ENCODE measurements at regions of chr5 and their contacts with region 1.

Region 1: DNA sequence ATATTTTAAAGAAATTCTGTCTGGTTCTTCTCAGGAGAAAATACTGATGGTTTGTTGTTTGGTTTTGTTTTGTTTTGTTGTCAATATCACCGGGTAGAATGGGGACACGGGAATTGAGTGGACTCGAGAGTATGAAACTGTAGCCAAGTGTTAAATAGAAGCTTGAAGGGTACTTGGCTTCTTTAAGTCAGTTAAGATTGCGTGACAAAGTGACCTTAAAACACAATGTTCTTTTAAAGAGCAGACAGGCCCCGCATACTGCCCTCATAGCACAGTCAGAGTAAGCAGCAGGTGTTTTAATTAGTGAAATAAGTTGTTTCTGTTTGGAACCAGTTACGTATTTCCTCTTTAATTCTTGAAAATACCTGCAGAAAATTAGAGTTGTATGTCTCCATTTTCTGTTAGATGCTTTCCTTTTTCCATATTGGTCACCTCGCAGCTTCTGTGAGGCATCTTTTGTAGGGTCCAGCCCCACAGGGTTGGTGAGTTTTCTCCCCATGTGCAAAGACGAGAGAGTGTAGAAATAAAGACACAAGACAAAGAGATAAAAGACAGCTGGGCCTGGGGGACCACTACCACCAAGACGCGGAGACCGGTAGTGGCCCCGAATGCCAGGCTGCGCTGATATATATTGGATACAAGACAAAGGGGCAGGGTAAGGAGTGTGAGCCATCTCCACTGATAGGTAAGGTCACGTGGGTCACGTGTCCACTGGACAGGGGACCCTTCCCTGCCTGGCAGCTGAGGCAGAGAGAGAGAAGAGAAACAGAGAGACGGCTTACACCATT is 9.6 kb downstream of the TRIP13 start:
- DNase-seq: no peak
- H3K4me3 ChIP-seq: no peak overlapping the region
- H3K27ac ChIP-seq: peak overlapping the region in 1 of 59 donors; percentile 21
- H3K27me3 ChIP-seq: no peaks in the 10 kb centered on the region
- CTCF ChIP-seq: no peak

Region 2: DNA sequence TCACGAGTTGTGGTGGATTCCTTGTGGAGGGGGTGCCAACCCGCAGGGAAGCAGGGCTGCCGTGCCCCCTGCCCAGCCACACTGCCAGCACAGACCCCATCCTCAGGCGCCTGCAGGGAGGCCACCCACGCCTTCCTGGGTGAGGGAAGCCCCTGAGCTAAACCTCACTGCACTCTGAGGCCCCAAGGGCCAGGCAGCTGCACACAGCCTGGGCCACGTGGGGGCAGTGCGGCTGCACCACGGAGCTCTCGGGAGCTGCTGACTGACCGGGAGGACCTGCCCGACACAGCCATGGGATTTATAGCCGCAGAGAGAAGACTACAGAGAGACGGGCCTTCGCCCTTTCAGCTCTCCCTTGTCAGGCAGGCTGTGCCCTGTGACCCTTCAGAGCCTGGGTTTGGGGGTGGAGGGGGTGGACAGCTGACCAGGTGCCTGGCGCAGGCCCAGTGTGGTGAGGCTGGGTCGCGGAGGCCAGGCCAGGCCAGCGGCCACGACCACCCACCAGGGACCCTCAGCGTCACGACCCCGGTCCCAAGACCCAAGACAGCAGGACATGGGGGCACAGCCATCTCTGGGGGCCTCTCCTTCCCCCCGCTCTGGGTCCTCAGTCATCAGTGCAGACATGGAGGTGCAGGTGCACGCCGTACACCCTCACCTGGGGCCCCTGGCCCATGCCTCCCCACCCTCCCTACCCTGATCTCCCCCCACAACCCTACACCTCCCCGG is 585.1 kb before region 1 on chr5:
- intact Hi-C with region 1: loop called in 1 of 2 experiments (anchors 5 kb)
- DNase-seq: peak in 4 of 10 donors; percentile 27 to 66 (median 50)
- H3K4me3 ChIP-seq: no peak overlapping the region
- H3K27ac ChIP-seq: peak overlapping the region in 1 of 59 donors; percentile 12
- H3K27me3 ChIP-seq: peaks cover 0 to 40% (median 28%) of the 10 kb centered on the region in 45 donors
- CTCF ChIP-seq: peak in 50 of 56 donors; percentile 24 to 64 (median 44)

Region 3: DNA sequence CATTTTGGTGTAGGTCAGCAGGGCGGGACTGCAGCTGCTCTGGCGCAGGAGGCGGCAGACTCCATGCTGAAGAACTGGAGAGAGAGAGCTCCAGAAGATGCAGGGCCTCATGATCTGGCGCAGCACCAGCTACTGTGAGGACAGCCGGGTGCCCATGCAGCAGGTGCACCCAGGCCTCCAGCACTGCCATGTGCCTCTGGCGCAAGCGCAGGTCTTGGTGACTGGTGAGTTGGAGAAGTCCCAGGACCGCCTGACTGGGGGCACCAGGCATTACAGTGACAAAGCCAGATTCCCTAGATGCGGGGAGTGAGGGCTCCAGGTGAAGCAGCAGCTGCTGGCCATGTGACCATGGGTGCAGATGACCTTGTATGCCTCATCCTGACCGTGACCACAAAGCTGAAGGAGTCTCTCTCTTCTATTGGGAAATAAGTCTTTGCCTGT is 483.6 kb before region 1 on chr5:
- intact Hi-C with region 1: no loop called
- DNase-seq: peak in 5 of 10 donors; percentile 25 to 43 (median 36)
- H3K4me3 ChIP-seq: no peak overlapping the region
- H3K27ac ChIP-seq: no peak overlapping the region
- H3K27me3 ChIP-seq: no peaks in the 10 kb centered on the region
- CTCF ChIP-seq: no peak

Region 4: GRCh38 chr5:442335-443238 is 459.7 kb before region 1 on chr5 and contains the start of gene EXOC3:
- intact Hi-C with region 1: loop called (anchors 5 to 10 kb)
- DNase-seq: peak in 9 of 10 donors; percentile 42 to 92 (median 63)
- H3K4me3 ChIP-seq: peak within 1 kb of the TSS; percentile 69 to 100 (median 95)
- H3K27ac ChIP-seq: peak within 1 kb of the TSS in 58 of 59 donors; percentile 29 to 94 (median 78)
- H3K27me3 ChIP-seq: peaks cover 0 to under 1% (median 0%) of the 10 kb centered on the region in 45 donors
- CTCF ChIP-seq: peak in 17 of 56 donors; percentile 6 to 38 (median 23)
- total RNA-seq, gene EXOC3: 50.6 to 107 (median 77.8) TPM

Region 5: GRCh38 chr5:945691-946551 is 43.6 kb after region 1 on chr5:
- intact Hi-C with region 1: no loop called
- DNase-seq: peak in 4 of 10 donors; percentile 16 to 43 (median 42)
- H3K4me3 ChIP-seq: peak overlapping the region in 32 of 59 donors; percentile 1 to 54 (median 20)
- H3K27ac ChIP-seq: peak overlapping the region in 1 of 59 donors; percentile 25
- H3K27me3 ChIP-seq: peaks cover 0 to 54% (median 10%) of the 10 kb centered on the region in 45 donors
- CTCF ChIP-seq: no peak

Region 6: DNA sequence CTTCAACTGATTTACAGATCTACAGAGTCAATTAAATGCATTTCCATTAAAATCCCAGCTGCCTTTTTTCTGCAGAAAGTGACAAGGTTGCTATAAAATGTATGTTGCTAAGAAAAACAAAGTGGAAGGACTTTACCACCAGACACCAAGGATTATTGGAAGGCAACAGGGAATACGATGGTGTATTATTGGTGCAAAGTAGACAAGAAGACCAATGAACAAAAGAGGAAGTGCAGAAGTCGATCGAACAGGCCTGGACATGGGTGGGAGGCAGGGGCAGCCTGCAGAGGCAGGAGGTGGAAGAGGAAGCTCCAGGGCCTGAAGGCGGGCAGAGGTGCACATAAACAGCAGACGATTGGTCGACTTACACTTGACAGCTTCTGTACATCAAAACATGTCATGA is 288.5 kb after region 1 on chr5:
- intact Hi-C with region 1: no loop called
- DNase-seq: peak in 1 of 10 donors; percentile 21
- H3K4me3 ChIP-seq: no peak overlapping the region
- H3K27ac ChIP-seq: no peak overlapping the region
- H3K27me3 ChIP-seq: peaks cover 0 to 41% (median 16%) of the 10 kb centered on the region in 45 donors
- CTCF ChIP-seq: no peak